SK-N-SH (cell line): ENCODE measurements at regions of chr5 and their contacts with region 1.

Region 1: DNA sequence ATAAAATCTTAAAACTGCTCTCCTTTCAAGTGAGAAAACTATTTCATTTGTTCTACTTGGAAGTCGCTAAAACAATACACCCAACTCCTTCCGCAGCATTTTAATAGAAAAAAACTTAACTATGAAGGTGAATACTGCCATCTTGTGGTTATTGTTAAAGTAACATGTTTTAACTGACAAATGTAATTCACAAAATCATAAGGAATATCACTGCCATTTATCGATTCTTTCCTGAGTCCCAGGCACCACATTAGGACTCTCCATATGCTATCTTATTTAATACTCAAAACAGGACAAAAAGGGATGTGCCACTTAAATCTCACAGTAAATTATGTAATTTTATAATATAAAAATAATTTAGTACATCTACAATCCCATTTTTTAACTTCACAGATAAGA is 130.5 kb upstream of the ITGA1 start:
- DNase-seq: peak; percentile 12
- H3K4me3 ChIP-seq: peak overlapping the region in 1 of 2 experiments; percentile 34; a peak in 1 of 4 replicates
- H3K27ac ChIP-seq: peak overlapping the region in 1 of 2 experiments; percentile 97; a peak in 2 of 4 replicates
- H3K4me1 ChIP-seq: peaks cover 7 to 19% of the 10 kb centered on the region in 2 experiments; a peak in 3 of 4 replicates
- H3K27me3 ChIP-seq: no peaks in the 10 kb centered on the region
- CTCF ChIP-seq: peak; percentile 69
- EP300 ChIP-seq: peak in 1 of 2 experiments; percentile 52; a peak in 1 of 4 replicates
- RAD21 ChIP-seq: peak; percentile 83

Region 2: DNA sequence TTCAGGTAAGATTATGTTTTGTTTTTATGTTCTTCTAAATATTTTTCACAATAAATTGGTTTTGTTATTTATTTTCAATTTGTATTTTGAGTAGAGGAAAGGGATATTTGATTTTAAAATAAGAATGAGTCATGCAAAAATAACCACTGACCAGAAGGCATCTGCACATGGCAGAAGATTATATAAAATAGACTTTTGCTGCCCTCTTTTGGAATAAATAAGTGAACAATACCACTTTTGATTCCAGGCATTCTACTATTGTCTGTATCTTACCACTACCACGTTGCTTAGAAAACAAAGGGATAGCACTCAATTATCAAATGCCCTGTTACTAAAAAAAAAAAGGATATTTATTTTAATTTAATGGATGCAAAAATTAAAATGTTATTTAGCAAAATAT is 96.9 kb before region 1 on chr5:
- CTCF ChIA-PET with region 1: interaction called, 10 read pairs
- POLR2A ChIA-PET with region 1: no interaction called
- DNase-seq: peak; percentile 11
- H3K4me3 ChIP-seq: no peak overlapping the region
- H3K27ac ChIP-seq: peak overlapping the region in 1 of 2 experiments; percentile 100; a peak in 2 of 4 replicates
- H3K4me1 ChIP-seq: peaks cover 0 to 31% of the 10 kb centered on the region in 2 experiments; a peak in 3 of 4 replicates
- H3K27me3 ChIP-seq: no peaks in the 10 kb centered on the region
- CTCF ChIP-seq: peak; percentile 36
- EP300 ChIP-seq: no peak
- RAD21 ChIP-seq: peak; percentile 82